Posterior vena cava (tissue), 2 donors: ENCODE measurements at regions of chr6 and their contacts with region 1.

Region 1: GRCh38 chr6:85323435-85324040 is 126.3 kb upstream of the NT5E start:
- DNase-seq: peak; percentile 83

Region 2: GRCh38 chr6:84681693-84682326 is 641.7 kb before region 1 on chr6:
- intact Hi-C with region 1: no loop called
- DNase-seq: peak; percentile 34

Region 3: GRCh38 chr6:85126485-85127167 is 196.9 kb before region 1 on chr6:
- intact Hi-C with region 1: loop called in 1 of 2 experiments (anchors 10 kb)
- DNase-seq: peak; percentile 80